ENCODE measurements at regions of chr6 and their contacts with region 1.

Region 1: DNA sequence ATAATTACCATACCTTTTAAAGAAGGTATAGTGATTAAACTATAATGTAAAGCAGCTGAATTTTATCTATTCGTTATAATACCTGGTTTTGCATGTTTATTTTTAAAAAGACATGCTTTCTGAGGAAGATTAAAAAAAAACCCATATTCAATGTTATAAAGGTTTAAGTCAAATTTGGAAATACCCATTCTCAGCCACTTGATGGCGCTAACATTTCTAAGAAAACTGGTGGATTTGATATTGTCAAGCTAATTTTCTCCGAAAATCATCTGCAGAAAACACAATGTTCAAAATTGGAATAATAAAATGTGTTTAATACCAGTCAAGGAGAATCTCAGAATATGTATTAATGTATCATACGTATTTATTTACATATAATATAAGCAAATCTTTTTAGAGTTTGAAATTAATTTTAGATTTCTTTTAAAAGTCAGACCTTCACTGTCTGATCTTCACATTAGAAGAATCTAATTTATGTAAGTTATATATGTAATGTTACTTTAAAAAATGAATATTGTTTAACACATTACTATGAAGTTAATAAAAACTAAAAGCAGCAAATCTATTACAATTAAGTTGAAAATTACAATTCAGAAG is 35.0 kb downstream of the SHPRH start:
- DNase-seq: peak; percentile 49
- ATAC-seq: no peak
- H3K4me3 ChIP-seq: no peak overlapping the region
- H3K27ac ChIP-seq: no peak overlapping the region
- H3K4me1 ChIP-seq: no peaks in the 10 kb centered on the region
- H3K27me3 ChIP-seq: no peaks in the 10 kb centered on the region
- CTCF ChIP-seq: peak; percentile 54
- EP300 ChIP-seq: no peak
- POLR2A ChIP-seq: no peak
- RAD21 ChIP-seq: no peak

Region 2: GRCh38 chr6:146258206-146258605 is 329.1 kb after region 1 on chr6:
- CTCF ChIA-PET with region 1: no interaction called
- POLR2A ChIA-PET with region 1: no interaction called
- in situ Hi-C with region 1: no loop called
- intact Hi-C with region 1: no loop called
- DNase-seq: no peak
- ATAC-seq: no peak
- H3K4me3 ChIP-seq: no peak overlapping the region
- H3K27ac ChIP-seq: no peak overlapping the region
- H3K4me1 ChIP-seq: no peaks in the 10 kb centered on the region
- H3K27me3 ChIP-seq: no peaks in the 10 kb centered on the region
- CTCF ChIP-seq: no peak
- EP300 ChIP-seq: no peak
- POLR2A ChIP-seq: no peak
- RAD21 ChIP-seq: no peak

Region 3: DNA sequence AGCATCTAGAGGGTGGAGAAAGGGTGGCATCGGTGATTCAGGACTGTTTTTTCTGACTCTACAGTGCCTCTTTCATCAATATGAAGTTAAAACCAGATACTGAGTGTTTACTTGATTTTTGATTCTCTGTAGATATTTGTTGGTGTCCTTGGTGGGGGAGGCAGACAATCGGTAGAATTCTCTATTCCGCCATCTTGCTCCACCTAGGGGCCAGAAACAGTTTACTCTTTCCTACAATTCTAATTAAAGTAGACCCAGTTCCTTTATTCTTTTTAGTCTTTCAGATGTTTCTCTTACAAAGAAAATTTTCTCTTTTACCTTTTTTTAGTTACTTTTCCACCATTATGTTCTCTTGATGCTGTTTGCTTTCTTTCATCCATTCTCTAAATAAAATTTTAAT is 452.4 kb after region 1 on chr6:
- CTCF ChIA-PET with region 1: no interaction called
- POLR2A ChIA-PET with region 1: no interaction called
- in situ Hi-C with region 1: no loop called
- intact Hi-C with region 1: loop called (anchors 5 kb)
- DNase-seq: no peak
- ATAC-seq: peak; percentile 39; the same call in 1 of the 3 replicates
- H3K4me3 ChIP-seq: no peak overlapping the region
- H3K27ac ChIP-seq: no peak overlapping the region
- H3K4me1 ChIP-seq: no peaks in the 10 kb centered on the region
- H3K27me3 ChIP-seq: no peaks in the 10 kb centered on the region
- CTCF ChIP-seq: no peak
- EP300 ChIP-seq: no peak
- POLR2A ChIP-seq: no peak
- RAD21 ChIP-seq: no peak

Region 4: DNA sequence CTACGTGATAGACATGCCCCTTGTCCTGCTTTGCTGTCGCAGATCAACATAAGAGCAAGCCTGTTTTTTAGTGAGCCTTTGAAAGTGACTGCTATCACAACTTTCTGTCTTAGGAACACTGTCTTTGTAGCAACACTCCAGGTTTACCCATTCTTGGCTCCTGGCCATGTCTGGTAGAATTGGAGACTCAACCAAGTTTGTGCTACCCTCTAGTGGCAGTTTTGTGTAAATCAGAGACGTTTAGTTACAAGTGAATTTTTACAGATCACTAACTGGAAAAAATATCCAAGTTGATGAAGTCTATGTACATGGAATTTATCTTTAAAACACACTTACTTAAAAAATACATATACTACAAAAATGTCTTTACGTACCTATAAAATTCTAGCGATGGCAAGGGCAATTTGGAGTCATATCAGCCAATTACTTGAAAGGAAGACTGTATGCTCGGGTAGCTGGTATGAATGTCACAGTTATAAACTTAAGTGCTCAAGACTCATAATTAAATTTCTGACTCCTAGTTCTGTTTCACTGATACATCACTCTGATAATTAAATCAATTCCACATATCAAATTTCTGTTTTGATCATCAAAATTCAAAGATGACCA is 771.0 kb after region 1 on chr6:
- CTCF ChIA-PET with region 1: no interaction called
- POLR2A ChIA-PET with region 1: no interaction called
- in situ Hi-C with region 1: loop called (anchors 25 kb)
- intact Hi-C with region 1: loop called (anchors 1 kb)
- DNase-seq: peak; percentile 84
- ATAC-seq: peak; percentile 87
- H3K4me3 ChIP-seq: no peak overlapping the region
- H3K27ac ChIP-seq: no peak overlapping the region
- H3K4me1 ChIP-seq: no peaks in the 10 kb centered on the region
- H3K27me3 ChIP-seq: no peaks in the 10 kb centered on the region
- CTCF ChIP-seq: peak; percentile 89
- EP300 ChIP-seq: no peak
- POLR2A ChIP-seq: no peak
- RAD21 ChIP-seq: peak; percentile 75

Measured in HepG2 (cell line).